ENCODE measurements at regions of chr2 and their contacts with region 1.

Region 1: GRCh38 chr2:176140513-176141317 is 10.6 kb upstream of the HOXD4 start:
- DNase-seq: peak; percentile 92

Region 2: GRCh38 chr2:176454893-176455811 is 314.4 kb after region 1 on chr2:
- intact Hi-C with region 1: loop called (anchors 5 kb)
- DNase-seq: peak; percentile 94

Region 3: GRCh38 chr2:176554101-176555048 is 413.7 kb after region 1 on chr2:
- intact Hi-C with region 1: loop called (anchors 2 to 10 kb)
- DNase-seq: no peak

Region 4: DNA sequence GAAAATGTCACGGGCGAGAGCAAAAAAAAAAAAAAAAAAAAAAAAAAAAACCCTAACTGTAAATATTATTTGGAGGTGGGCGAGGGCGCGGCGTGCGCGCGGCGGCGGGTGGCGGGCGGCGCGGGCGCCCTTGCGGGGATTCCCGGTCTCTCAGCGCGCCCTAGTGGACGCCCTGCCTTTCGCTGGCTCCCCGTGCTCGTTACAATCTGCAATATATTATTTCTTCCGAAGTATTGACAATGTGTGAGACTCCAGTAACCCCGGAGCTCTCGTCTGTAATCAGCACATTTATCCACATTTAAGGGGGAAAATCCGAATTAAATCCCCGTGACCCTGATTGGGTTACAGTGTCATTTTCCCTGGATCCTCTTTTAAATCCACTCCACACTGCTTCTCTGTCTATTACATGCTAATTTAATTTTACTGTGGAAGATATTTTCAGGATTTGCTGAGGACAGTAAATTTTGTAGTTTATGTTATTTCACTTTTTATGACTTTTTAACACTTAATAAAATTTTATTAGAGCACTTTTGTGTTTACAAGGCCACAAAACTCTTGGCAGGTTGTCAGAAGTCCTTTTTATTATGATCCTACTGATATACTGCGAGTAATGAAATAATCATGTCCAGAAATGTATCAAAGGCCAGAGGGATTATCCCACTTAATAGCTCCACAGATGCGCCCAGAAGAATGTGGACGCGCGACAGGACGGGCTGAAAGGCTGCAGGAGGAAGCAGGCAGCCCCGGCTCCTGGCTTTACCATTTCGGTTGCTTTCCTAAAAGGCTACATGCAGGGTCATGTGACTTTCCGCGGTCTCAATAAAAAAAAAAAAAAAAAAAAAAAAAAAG is 497.7 kb after region 1 on chr2:
- intact Hi-C with region 1: loop called (anchors 5 kb)
- DNase-seq: peak; percentile 91

Measured in posterior vena cava (tissue), 2 donors.